Common myeloid progenitor, CD34-positive (primary cell): ENCODE measurements at regions of chr1 and their contacts with region 1.

Region 1: GRCh38 chr1:23496490-23497181 is 12.7 kb upstream of the ASAP3 start:
- DNase-seq: no peak
- H3K4me3 ChIP-seq: no peak overlapping the region
- H3K27ac ChIP-seq: no peak overlapping the region
- H3K4me1 ChIP-seq: peaks cover 0 to 3% (median 1%) of the 10 kb centered on the region in 4 experiments
- H3K27me3 ChIP-seq: no peaks in the 10 kb centered on the region

Region 2: DNA sequence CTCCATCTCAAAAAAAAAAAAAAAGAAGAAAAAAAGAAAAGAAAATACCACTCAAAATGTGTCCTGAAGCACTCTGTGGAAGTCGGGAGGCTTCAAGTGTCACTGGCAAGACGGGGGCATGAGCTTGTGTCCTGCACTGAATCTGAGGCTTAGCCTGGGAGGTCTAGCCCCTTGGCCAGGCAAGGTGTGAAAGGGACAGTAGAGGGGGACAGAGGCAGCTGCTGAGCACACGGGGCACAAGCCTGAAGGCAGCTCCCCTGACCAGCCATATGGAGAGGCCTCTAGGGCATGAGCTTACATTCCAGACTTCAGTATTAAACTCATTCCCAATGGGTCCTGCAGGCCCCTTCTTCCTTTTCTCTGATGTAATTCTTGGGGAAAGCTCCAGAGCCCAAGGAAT is 10.9 kb after region 1 on chr1:
- CTCF ChIA-PET with region 1: interaction called, 34 read pairs
- POLR2A ChIA-PET with region 1: interaction called, 5 read pairs
- DNase-seq: no peak
- H3K4me3 ChIP-seq: no peak overlapping the region
- H3K27ac ChIP-seq: no peak overlapping the region
- H3K4me1 ChIP-seq: no peaks in the 10 kb centered on the region
- H3K27me3 ChIP-seq: no peaks in the 10 kb centered on the region

Region 3: DNA sequence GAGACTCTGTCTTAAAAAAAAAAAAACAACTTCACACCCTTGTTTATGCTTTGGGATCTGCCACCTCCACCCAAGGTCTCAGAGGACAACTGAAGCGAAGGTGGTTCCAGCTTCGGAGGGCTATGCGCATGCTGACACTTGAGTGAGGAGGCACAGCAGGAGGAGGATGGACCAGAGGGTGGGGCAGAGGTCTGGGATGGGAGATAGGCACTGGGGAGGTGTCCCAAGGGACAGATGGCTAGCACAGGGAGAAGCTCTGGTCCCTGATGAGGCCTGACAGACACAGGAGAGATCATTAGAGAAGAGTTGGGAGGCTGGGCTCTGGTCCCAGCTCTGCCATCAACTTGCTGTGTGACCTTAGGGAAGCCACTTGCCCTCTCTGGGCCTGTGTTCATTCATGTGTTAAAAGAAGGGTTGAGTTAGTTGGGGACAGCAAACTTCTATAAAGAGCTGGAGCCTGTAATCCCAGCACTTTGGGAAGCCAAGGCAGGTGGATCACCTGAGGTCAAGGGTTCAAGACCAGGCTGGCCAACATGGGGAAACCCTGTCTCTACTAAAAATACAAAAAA is 17.6 kb after region 1 on chr1:
- CTCF ChIA-PET with region 1: interaction called, 41 read pairs
- POLR2A ChIA-PET with region 1: interaction called, 3 read pairs
- DNase-seq: no peak
- H3K4me3 ChIP-seq: no peak overlapping the region
- H3K27ac ChIP-seq: no peak overlapping the region
- H3K4me1 ChIP-seq: no peaks in the 10 kb centered on the region
- H3K27me3 ChIP-seq: no peaks in the 10 kb centered on the region

Region 4: DNA sequence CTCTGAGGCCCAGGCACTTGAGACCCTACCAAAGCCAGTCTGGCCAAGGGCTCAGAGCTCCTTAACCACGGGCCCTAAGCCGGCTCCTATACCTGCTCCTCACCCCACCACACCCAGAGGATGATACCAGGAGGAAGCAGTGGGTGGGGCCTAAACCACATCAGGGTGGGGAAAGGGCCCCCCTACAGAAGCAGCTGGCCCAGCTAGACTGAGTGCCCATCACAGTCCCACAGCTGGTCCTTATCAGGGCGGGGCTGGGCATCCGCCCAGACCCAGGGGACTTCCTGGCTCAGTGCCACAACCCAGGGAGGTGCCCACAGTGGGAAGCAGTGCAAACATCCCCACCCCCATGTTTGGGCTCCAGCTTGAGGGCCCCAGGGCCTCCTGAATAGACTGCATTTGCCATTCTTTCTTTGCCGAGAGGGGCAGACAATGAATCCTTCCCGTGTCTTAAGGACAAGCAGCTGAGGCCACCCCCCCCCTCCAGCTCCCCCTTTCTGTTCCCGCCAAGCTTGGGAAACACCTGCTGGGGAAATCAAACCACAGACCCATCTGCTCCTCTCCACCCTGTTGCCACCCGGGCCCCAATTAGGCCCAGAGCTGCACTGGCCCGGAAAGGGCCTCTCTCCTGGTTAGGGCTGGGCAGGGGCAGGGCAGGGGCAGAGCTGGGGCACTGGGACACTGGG is 28.2 kb after region 1 on chr1:
- CTCF ChIA-PET with region 1: interaction called, 98 read pairs
- POLR2A ChIA-PET with region 1: interaction called, 4 read pairs
- DNase-seq: peak; percentile 73 to 94 (median 93)
- H3K4me3 ChIP-seq: peak overlapping the region in 4 of 7 experiments; percentile 28 to 50 (median 40)
- H3K27ac ChIP-seq: peak overlapping the region in 1 of 2 experiments; percentile 60
- H3K4me1 ChIP-seq: peaks cover 29 to 66% (median 61%) of the 10 kb centered on the region in 4 experiments
- H3K27me3 ChIP-seq: no peaks in the 10 kb centered on the region

Region 5: DNA sequence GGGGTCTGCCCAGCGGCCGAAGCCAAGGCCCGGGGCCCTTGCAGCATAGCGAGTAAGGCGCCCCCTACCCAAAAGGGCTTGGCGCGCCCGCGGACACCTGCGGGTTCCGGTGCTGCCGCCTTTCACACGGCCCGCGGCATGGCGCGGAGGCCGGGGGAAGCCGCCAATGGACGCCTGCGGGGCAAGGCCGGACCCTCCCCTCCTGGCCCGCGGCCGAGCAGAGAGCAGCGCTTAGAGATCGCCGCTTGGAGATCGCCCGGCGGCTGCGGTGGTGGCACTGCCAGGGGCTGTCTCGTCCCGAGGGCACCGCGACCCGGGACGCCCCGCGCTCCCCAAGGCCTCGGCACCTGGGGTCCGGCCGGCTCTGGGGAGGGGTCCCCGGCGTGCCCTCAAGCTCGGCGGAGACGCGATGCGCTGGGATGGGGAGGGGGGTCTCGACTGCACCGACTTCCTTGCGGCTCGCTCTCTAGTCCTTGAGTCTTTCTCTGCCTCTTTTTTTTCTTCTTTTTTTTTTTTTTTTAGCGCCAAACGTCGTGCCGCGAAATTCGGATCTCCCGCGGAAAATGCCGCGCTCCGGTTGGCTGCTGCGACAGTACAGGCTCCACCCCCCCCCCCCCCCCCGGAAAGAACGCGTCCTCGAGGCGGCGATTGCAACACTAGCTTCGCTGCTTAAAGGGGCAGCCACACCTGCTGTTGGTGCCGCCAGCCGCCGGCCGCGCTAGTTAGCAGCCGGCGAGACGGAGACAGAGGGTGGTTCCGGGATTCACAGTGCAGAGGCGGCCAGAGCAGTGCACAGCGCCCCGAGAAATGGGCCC is 34.3 kb after region 1 on chr1 and contains the start of gene E2F2:
- CTCF ChIA-PET with region 1: interaction called, 183 read pairs
- POLR2A ChIA-PET with region 1: no interaction called
- DNase-seq: peak; percentile 81 to 90 (median 87)
- H3K4me3 ChIP-seq: peak within 1 kb of the TSS; percentile 53 to 78 (median 72)
- H3K27ac ChIP-seq: no peak within 1 kb of the TSS
- H3K4me1 ChIP-seq: peaks cover 37 to 80% (median 72%) of the 10 kb centered on the region in 4 experiments
- H3K27me3 ChIP-seq: no peaks in the 10 kb centered on the region

Region 6: GRCh38 chr1:23567996-23568607 is 71.5 kb after region 1 on chr1:
- CTCF ChIA-PET with region 1: no interaction called
- POLR2A ChIA-PET with region 1: no interaction called
- DNase-seq: no peak
- H3K4me3 ChIP-seq: peak overlapping the region in 4 of 7 experiments; percentile 40 to 43 (median 41)
- H3K27ac ChIP-seq: peak overlapping the region in 1 of 2 experiments; percentile 54
- H3K4me1 ChIP-seq: peaks cover 0 to 18% (median 11%) of the 10 kb centered on the region in 4 experiments
- H3K27me3 ChIP-seq: peaks cover 0 to 77% (median 33%) of the 10 kb centered on the region in 5 experiments

Region 7: GRCh38 chr1:23634842-23635651 is 138.4 kb after region 1 on chr1:
- CTCF ChIA-PET with region 1: interaction called, 31 read pairs
- POLR2A ChIA-PET with region 1: interaction called, 3 read pairs
- DNase-seq: peak; percentile 60 to 82 (median 77)
- H3K4me3 ChIP-seq: peak overlapping the region in 6 of 7 experiments; percentile 5 to 77 (median 58)
- H3K27ac ChIP-seq: no peak overlapping the region
- H3K4me1 ChIP-seq: peaks cover 2 to 21% (median 20%) of the 10 kb centered on the region in 4 experiments
- H3K27me3 ChIP-seq: peaks cover 0 to 2% (median 0%) of the 10 kb centered on the region in 5 experiments

Region 8: GRCh38 chr1:23867953-23868556 is 371.4 kb after region 1 on chr1 and contains the start of gene FUCA1:
- CTCF ChIA-PET with region 1: no interaction called
- POLR2A ChIA-PET with region 1: no interaction called
- DNase-seq: peak; percentile 95 to 98 (median 97)
- H3K4me3 ChIP-seq: peak within 1 kb of the TSS; percentile 63 to 87 (median 82)
- H3K27ac ChIP-seq: peak within 1 kb of the TSS in 1 of 2 experiments; percentile 55
- H3K4me1 ChIP-seq: peaks cover 15 to 44% (median 29%) of the 10 kb centered on the region in 4 experiments
- H3K27me3 ChIP-seq: no peaks in the 10 kb centered on the region